Dendritic cell treated with granulocyte-macrophage colony-stimulating factor and Interleukin-4, amounts not matched to agents 40 ng/mL and 50 ng/mL, for 4 days (primary cell): ENCODE measurements at regions of chr16 and their contacts with region 1.

Region 1: GRCh38 chr16:29182501-29182900 is 197.6 kb downstream of the LAT start:
- H3K4me3 Mint-ChIP-seq: no peak overlapping the region
- H3K27ac Mint-ChIP-seq: no peak overlapping the region
- H3K4me1 Mint-ChIP-seq: peaks cover 71% of the 10 kb centered on the region
- H3K27me3 Mint-ChIP-seq: peaks cover 86% of the 10 kb centered on the region

Region 2: GRCh38 chr16:29112755-29113347 is 69.7 kb before region 1 on chr16:
- intact Hi-C with region 1: loop called (anchors 10 kb)
- H3K4me3 Mint-ChIP-seq: no peak overlapping the region
- H3K27ac Mint-ChIP-seq: no peak overlapping the region
- H3K4me1 Mint-ChIP-seq: peaks cover 41% of the 10 kb centered on the region
- H3K27me3 Mint-ChIP-seq: peaks cover 23% of the 10 kb centered on the region